Activated B cell treated with CpG ODN at 0.5 μM for 24 hours (primary cell): ENCODE measurements at regions of chr1 and their contacts with region 1.

Region 1: DNA sequence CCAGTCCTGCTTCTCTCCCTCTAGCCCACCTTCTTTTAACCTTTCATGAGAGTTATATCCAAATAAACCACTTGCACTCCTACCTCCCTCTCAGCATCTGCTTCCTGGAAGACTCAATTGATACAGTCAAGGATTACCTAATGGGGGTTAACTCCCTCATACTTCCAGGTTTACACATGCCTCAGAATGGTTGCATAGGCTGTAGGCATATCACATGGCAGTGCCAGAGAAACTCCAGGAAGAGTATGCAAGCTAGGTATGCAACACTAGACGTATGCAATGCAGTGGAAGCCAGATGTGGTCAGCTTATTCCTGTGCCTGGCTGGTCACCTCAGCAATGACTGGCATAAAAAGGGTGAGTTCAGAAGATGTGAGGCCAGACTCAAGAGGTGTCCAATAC is 32.7 kb upstream of the VANGL1 start:
- DNase-seq: no peak
- ATAC-seq: no peak
- H3K4me3 Mint-ChIP-seq: no peak overlapping the region
- H3K27ac Mint-ChIP-seq: no peak overlapping the region
- H3K4me1 Mint-ChIP-seq: no peaks in the 10 kb centered on the region
- H3K27me3 Mint-ChIP-seq: peaks cover 4% of the 10 kb centered on the region
- CTCF ChIP-seq: no peak

Region 2: GRCh38 chr1:115706587-115707425 is 97.8 kb after region 1 on chr1:
- CTCF ChIA-PET with region 1: interaction called, 6 read pairs
- POLR2A ChIA-PET with region 1: no interaction called
- intact Hi-C with region 1: loop called (anchors 2 kb)
- DNase-seq: no peak
- ATAC-seq: no peak
- H3K4me3 Mint-ChIP-seq: no peak overlapping the region
- H3K27ac Mint-ChIP-seq: no peak overlapping the region
- H3K4me1 Mint-ChIP-seq: no peaks in the 10 kb centered on the region
- H3K27me3 Mint-ChIP-seq: peaks cover 10% of the 10 kb centered on the region
- CTCF ChIP-seq: no peak